AG04449 (cell line): ENCODE measurements at regions of chr19 and their contacts with region 1.

Region 1: GRCh38 chr19:3544742-3545668 is 6.0 kb downstream of the TEKTIP1 start:
- DNase-seq: no peak
- H3K4me3 ChIP-seq: no peak overlapping the region
- CTCF ChIP-seq: peak; percentile 97

Region 2: DNA sequence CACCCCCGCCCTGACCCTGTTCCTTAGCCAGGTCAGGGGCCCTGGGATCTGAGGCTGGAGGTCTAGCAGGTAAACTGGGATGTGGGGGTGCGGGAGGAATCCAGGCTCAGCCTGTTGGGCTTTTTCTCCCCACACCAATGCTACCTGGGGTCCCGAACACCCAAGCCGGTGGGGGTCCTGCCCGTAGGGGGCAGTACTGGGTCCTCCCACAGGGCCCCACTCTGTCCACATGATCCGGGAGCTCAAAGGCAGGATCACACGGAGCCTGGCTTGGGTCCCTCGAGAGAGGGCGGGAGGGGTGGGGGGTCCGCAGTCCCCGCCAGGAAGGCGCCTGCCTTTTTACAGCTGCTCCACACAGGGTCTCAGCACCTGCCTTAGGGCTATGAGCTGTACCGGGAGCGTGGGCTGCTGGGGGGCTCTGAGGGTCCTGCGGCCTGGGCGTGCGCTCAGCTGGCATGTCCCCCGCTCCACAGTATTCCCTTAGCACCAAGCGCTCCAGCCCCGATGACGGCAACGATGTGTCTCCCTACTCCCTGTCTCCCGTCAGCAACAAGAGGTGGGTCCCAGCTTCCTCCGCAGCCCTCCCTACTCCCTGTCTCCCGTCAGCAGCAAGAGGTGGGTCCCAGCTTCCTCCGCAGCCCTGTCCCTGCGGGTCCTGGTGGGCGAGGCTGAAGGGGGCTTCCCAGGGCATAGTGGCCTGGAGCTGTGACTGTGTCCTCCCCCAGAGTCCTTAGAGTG is 18.3 kb before region 1 on chr19:
- CTCF ChIA-PET with region 1: interaction called, 17 read pairs
- POLR2A ChIA-PET with region 1: no interaction called
- DNase-seq: no peak
- H3K4me3 ChIP-seq: no peak overlapping the region
- CTCF ChIP-seq: no peak

Region 3: DNA sequence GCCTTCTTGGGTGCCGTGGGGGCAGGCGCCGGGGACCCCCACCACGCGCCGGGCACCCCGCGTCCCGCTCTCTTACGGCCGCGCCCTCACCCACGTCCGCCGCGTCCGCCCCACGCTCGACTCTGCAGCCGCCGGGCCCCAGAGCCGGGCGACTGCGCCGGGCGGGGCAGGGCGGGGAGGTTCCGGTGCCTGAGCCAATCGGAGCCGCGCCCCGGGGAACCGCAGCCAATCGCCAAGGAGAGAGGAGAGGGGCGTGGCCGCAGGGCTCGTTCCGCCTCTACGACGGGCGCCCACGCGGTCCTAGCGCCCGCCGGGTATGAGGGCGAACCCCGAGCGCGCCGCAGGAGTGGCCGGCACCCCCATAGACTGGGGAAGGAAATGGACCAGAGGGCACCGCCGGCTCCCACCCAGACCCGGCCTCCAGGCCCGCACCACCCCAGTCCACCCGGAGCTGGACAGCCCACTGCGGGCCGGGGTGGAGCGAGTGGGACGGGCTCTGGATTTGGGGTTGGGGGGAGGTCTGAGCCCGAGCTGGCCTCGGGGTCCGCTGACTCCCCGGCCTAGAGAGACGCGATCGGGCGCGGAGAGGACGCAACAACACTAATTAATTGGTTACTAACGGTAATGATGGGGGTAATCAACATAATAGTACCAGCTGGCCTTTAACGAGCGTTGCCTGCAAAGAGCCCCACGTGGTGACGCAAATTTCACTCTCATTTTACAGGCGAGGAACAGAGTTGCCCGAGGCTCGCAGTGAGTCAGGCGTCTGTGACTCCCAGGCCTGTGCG is 12.7 kb after region 1 on chr19 and contains the start of gene MFSD12:
- CTCF ChIA-PET with region 1: interaction called, 66 read pairs
- POLR2A ChIA-PET with region 1: interaction called, 3 read pairs
- DNase-seq: peak; percentile 40
- H3K4me3 ChIP-seq: peak within 1 kb of the TSS; percentile 86
- CTCF ChIP-seq: no peak

Region 4: DNA sequence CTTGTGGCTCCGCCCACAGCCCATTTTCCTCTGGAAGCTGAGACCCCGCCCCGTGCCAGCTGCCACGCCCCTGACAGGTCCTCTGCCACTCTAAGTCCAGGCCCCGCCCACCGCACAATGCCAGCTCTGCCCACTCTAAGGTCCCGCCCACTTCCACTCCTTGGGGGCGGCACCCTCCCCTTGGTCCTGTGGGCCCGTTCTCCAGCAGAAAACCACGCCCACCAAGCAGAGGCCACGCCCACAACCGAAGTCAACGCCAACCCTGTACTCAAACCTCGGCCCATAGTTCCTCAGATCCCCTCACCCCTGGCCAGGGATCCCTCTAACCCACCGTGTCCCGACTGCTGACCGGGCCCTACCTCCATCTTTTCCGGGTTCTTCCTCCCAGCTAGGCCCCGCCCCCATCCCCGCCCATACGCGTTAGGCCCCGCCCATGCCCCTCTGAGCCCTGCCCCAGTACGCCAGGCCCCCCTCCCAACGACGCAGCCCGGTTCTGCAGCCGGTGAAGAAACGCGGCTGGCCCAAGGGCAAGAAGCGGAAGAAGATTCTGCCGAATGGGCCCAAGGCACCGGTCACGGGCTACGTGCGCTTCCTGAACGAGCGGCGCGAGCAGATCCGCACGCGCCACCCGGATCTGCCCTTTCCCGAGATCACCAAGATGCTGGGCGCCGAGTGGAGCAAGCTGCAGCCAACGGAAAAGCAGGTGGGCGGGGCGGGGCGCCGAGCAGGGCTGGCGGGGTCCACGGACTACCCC is 29.1 kb after region 1 on chr19:
- CTCF ChIA-PET with region 1: interaction called, 12 read pairs
- POLR2A ChIA-PET with region 1: no interaction called
- DNase-seq: peak; percentile 51
- H3K4me3 ChIP-seq: peak overlapping the region; percentile 82
- CTCF ChIP-seq: no peak

Region 5: DNA sequence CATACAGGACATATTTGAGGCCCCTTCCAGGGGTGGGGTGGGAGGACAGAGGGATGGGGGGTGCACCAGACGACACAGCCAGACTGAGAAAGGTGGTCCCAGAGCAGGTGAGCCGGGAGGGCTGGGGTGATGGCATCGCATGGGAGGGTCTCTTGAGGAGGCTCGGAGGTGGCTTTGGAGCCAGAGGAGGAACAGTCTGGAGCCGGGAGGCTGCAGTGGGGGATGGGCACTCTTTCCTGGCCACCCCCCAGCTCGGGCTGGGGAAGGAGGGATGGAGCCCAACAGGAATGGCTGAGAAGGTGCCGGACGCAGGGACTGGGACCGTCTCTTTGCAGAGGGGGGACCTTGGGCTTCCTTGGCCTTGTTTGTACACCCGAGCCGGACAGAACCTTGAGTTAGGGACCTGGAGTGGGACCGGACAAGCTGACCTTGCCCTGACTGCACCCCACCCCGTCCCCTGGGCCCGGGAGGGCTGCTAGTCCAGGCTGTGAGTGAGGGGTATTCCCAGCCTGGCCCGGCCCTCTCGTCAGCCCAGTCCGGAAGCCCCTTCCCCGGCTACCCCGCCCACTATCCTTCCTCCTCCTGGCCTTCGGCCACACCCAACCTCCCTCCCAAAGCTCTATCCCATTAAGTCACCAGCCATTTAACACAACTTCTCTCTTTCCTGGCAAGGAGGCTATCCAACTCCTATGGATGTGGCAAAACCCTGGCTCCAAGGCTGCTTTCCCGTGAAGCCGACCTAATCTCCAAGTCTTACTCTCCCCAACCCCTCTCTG is 62.5 kb after region 1 on chr19:
- CTCF ChIA-PET with region 1: interaction called, 10 read pairs
- POLR2A ChIA-PET with region 1: no interaction called
- DNase-seq: no peak
- H3K4me3 ChIP-seq: peak overlapping the region; percentile 72
- CTCF ChIP-seq: no peak

Region 6: GRCh38 chr19:3618144-3618810 is 73.3 kb after region 1 on chr19:
- CTCF ChIA-PET with region 1: interaction called, 54 read pairs
- POLR2A ChIA-PET with region 1: no interaction called
- DNase-seq: no peak
- H3K4me3 ChIP-seq: no peak overlapping the region
- CTCF ChIP-seq: peak; percentile 90